K562 (cell line): ENCODE measurements at regions of chr11 and their contacts with region 1.

Region 1: GRCh38 chr11:71070491-71071453 is 181.6 kb downstream of the SHANK2 start:
- DNase-seq: no peak
- ATAC-seq: no peak
- H3K4me3 ChIP-seq: no peak overlapping the region
- H3K27ac ChIP-seq: no peak overlapping the region
- H3K4me1 ChIP-seq: no peaks in the 10 kb centered on the region
- H3K27me3 ChIP-seq: peaks cover 0 to 13% of the 10 kb centered on the region in 2 experiments; a peak in 2 of 5 replicates
- CTCF ChIP-seq: no peak
- EP300 ChIP-seq: no peak
- POLR2A ChIP-seq: no peak
- RAD21 ChIP-seq: no peak

Region 2: DNA sequence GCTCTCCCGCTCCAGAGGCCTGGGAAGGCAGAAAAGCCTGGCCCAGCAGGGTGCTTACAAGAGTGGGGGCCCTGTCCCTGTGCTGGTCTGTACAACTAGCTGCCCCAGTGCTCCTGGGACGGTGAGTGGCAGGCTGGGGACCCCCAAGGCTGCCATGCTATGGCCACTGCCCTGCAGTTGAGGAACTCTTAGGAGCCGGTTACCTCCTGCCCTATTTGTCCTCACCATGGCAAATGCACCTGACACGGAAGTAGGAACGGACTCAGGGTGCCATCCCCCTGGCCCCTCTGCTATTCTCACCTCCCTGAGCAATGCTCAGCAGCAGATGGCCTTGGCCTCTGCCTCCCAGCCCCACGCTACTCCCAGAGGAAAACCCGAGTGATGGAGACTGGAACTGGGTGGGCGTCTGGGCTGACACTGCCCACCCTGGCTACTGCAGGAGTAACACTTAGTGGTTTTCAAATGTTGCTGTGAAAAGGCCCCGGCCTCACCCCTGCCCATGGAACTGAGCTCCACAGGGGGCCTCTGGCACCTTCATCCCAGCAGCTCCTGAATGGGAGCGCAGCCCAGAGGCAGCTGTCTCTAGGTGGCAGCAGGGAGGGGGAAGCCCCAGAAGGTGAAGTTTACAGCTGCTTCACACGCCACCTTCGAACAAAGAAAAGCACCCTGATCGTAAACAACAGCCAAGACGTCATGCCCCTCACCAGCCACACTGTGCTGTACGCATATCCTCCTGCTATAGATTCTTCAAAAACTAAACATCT is 567.1 kb before region 1 on chr11:
- CTCF ChIA-PET with region 1: no interaction called
- POLR2A ChIA-PET with region 1: no interaction called
- in situ Hi-C with region 1: loop called (anchors 25 kb)
- intact Hi-C with region 1: no loop called
- DNase-seq: peak in 2 of 4 experiments; percentile 26 to 30
- ATAC-seq: peak; percentile 40; the same call in 1 of the 3 replicates
- H3K4me3 ChIP-seq: no peak overlapping the region
- H3K27ac ChIP-seq: no peak overlapping the region
- H3K4me1 ChIP-seq: peaks cover 0 to 3% of the 10 kb centered on the region in 2 experiments; a peak in 1 of 5 replicates
- H3K27me3 ChIP-seq: peaks cover 26 to 96% of the 10 kb centered on the region in 2 experiments; a peak in 4 of 5 replicates
- CTCF ChIP-seq: peak in 2 of 3 experiments; percentile 17 to 22; a peak in 2 of 6 replicates
- EP300 ChIP-seq: no peak
- POLR2A ChIP-seq: no peak
- RAD21 ChIP-seq: no peak

Region 3: DNA sequence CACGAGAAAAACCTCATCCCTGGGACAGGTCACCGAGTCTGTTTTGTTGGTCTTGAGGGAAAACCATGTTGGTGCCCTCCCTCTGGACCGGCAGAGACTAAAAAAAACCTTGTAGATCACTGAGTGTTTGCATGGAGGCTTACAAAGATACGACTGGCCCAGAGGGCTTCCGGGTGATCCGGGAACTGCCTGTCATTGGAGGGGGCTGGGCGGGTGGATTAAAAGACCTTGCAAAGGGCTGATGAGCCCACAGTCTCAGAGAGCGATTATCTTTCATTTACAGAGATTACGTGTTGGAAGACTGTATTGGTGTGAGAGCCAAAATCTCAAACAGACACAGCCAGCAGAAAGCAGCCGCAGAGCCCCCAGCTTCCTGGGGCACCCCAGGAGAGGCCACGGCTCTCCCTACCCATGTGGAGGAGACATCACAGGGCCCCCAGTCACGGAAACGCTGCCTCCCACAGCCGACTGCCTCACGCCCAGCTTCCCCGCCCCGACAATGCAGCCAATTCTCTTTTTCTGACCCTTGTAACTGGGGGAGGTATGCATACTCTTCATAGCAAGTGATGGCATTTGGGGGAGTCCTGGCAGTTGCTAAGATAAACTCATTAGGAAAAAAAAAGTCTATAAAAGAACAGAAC is 246.0 kb before region 1 on chr11:
- CTCF ChIA-PET with region 1: no interaction called
- POLR2A ChIA-PET with region 1: no interaction called
- in situ Hi-C with region 1: loop called (anchors 25 kb)
- intact Hi-C with region 1: no loop called
- DNase-seq: no peak
- ATAC-seq: no peak
- H3K4me3 ChIP-seq: no peak overlapping the region
- H3K27ac ChIP-seq: no peak overlapping the region
- H3K4me1 ChIP-seq: no peaks in the 10 kb centered on the region
- H3K27me3 ChIP-seq: peaks cover 36 to 71% of the 10 kb centered on the region in 2 experiments; a peak in 3 of 5 replicates
- CTCF ChIP-seq: no peak
- EP300 ChIP-seq: no peak
- POLR2A ChIP-seq: no peak
- RAD21 ChIP-seq: no peak